WTC11 (cell line): ENCODE measurements at regions of chr2 and their contacts with region 1.

Region 1: DNA sequence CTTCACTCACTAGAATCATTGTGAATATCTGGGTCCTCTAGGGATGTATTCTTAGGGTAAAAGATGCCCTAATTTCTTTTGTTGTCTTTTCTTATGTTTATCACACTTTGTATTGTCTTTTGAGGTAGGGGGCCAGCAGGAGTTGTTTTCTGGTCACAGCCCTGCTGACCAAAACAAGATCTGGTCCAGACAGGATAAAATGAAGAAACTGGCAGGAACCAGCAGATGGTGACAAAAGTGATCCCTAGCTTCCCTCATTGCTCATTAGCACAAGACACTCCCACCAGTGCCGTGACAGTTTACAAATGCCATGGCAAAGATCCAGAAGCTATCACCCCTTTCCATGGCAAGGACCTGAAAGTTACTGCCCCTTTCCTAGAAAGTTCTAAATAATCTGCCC is 81.7 kb upstream of the CCDC85A start:
- DNase-seq: no peak
- ATAC-seq: peak; percentile 72
- H3K4me3 Mint-ChIP-seq: no peak overlapping the region
- H3K27ac Mint-ChIP-seq: peak overlapping the region; percentile 48
- H3K4me1 Mint-ChIP-seq: peaks cover 11% of the 10 kb centered on the region
- H3K27me3 Mint-ChIP-seq: no peaks in the 10 kb centered on the region; the same call in 1 of the 2 replicates
- CTCF ChIP-seq: no peak

Region 2: DNA sequence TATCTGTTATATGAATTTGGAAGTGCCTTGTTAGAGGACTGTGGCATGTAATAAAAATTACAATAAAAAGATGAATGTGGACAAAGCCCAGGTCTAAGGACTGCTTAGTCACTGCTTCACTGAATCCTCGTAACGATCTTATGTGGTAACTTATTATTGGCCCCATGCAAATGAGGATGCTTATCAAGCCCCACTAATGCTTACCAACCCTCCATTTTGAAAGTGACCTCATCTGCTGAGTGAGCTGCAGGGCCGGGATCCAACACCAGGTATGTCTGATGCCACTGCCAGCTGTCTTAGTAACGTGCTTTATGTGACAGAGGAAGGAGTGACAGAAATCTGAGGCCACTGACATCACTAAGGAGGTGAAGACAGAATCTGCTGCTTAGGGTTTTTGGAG is 16.4 kb after region 1 on chr2:
- CTCF ChIA-PET with region 1: interaction called, 10 read pairs
- POLR2A ChIA-PET with region 1: no interaction called
- DNase-seq: no peak
- ATAC-seq: peak; percentile 45
- H3K4me3 Mint-ChIP-seq: peak overlapping the region; percentile 65
- H3K27ac Mint-ChIP-seq: peak overlapping the region; percentile 91
- H3K4me1 Mint-ChIP-seq: peaks cover 57% of the 10 kb centered on the region
- H3K27me3 Mint-ChIP-seq: no peaks in the 10 kb centered on the region
- CTCF ChIP-seq: no peak

Region 3: GRCh38 chr2:56624181-56624580 is 522.1 kb after region 1 on chr2:
- CTCF ChIA-PET with region 1: no interaction called
- POLR2A ChIA-PET with region 1: no interaction called
- DNase-seq: no peak
- ATAC-seq: no peak
- H3K4me3 Mint-ChIP-seq: no peak overlapping the region
- H3K27ac Mint-ChIP-seq: no peak overlapping the region
- H3K4me1 Mint-ChIP-seq: no peaks in the 10 kb centered on the region
- H3K27me3 Mint-ChIP-seq: no peaks in the 10 kb centered on the region
- CTCF ChIP-seq: no peak